ENCODE measurements at regions of chr17 and their contacts with region 1.

Region 1: DNA sequence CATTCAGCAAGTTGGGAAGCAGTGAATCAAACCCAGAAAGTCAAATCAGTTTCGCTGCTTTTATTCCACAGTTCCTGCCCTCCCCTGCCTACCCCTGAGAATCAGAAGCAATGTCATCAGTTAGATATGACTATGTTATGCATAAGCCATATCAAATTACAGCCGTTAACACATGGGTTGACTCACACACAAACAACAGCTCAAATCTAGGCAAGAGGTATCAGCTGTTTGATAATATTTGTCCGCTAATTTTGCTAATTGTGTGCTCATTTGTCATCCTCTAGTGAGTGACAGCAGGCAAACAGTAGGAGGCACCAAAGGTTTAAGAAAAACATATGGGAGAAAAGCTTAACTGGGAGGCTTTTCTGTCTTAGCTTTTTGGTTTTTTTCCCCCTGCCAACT is 327.4 kb upstream of the CCL2 start:
- DNase-seq: peak in 1 of 2 donors; percentile 63
- H3K4me3 ChIP-seq: no peak overlapping the region
- H3K27ac ChIP-seq: no peak overlapping the region
- H3K4me1 ChIP-seq: no peaks in the 10 kb centered on the region
- H3K27me3 ChIP-seq: peaks cover 0 to 47% (median 3%) of the 10 kb centered on the region in 3 donors
- CTCF ChIP-seq: peak in 2 of 7 experiments; percentile 34 to 36
- EP300 ChIP-seq: no peak
- POLR2A ChIP-seq: no peak

Region 2: GRCh38 chr17:33854596-33854995 is 73.1 kb before region 1 on chr17:
- intact Hi-C with region 1: no loop called
- DNase-seq: no peak
- H3K4me3 ChIP-seq: no peak overlapping the region
- H3K27ac ChIP-seq: no peak overlapping the region
- H3K4me1 ChIP-seq: no peaks in the 10 kb centered on the region
- H3K27me3 ChIP-seq: peaks cover 0 to 5% (median 0%) of the 10 kb centered on the region in 3 donors
- CTCF ChIP-seq: no peak
- EP300 ChIP-seq: no peak
- POLR2A ChIP-seq: no peak

Region 3: GRCh38 chr17:33864758-33865229 is 62.9 kb before region 1 on chr17:
- intact Hi-C with region 1: no loop called
- DNase-seq: peak in 1 of 2 donors; percentile 36
- H3K4me3 ChIP-seq: no peak overlapping the region
- H3K27ac ChIP-seq: no peak overlapping the region
- H3K4me1 ChIP-seq: no peaks in the 10 kb centered on the region
- H3K27me3 ChIP-seq: peaks cover 0 to 18% (median 0%) of the 10 kb centered on the region in 3 donors
- CTCF ChIP-seq: no peak
- EP300 ChIP-seq: no peak
- POLR2A ChIP-seq: no peak

Region 4: GRCh38 chr17:34146440-34147043 is 218.8 kb after region 1 on chr17:
- intact Hi-C with region 1: loop called (anchors 5 kb)
- DNase-seq: peak; percentile 74 to 77
- H3K4me3 ChIP-seq: no peak overlapping the region
- H3K27ac ChIP-seq: no peak overlapping the region
- H3K4me1 ChIP-seq: no peaks in the 10 kb centered on the region
- H3K27me3 ChIP-seq: peaks cover 0 to 27% (median 4%) of the 10 kb centered on the region in 3 donors
- CTCF ChIP-seq: peak in 5 of 7 experiments; percentile 52 to 78 (median 61)
- EP300 ChIP-seq: no peak
- POLR2A ChIP-seq: no peak

Measured in stomach (tissue), 19 donors.